CD14-positive monocyte (primary cell): ENCODE measurements at regions of chr16 and their contacts with region 1.

Region 1: DNA sequence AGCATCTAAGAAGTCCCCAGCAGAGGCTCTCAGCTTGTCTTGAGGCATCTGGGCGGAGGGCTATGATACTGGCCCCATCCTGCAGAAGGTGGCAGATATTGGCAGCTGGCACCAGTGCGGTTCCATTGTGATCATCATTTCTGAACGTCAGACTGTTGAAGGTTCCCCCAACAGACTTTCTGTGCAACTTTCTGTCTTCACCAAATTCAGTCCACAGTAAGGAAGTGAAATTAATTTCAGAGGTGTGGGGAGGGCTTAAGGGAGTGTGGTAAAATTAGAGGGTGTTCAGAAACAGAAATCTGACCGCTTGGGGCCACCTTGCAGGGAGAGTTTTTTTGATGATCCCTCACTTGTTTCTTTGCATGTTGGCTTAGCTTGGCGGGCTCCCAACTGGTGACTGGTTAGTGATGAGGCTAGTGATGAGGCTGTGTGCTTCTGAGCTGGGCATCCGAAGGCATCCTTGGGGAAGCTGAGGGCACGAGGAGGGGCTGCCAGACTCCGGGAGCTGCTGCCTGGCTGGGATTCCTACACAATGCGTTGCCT is at the start of gene CIITA:
- DNase-seq: peak; percentile 91 to 96 (median 95)
- H3K4me3 ChIP-seq: peak within 1 kb of the TSS; percentile 82 to 96 (median 94)
- H3K4me3 Mint-ChIP-seq: peak within 1 kb of the TSS; percentile 93 to 97
- H3K27ac ChIP-seq: peak within 1 kb of the TSS; percentile 62 to 85
- H3K27ac Mint-ChIP-seq: peak within 1 kb of the TSS; percentile 91 to 97 (median 95)
- H3K4me1 ChIP-seq: peaks cover 73 to 79% of the 10 kb centered on the region in 2 donors
- H3K4me1 Mint-ChIP-seq: peaks cover 80% of the 10 kb centered on the region
- H3K27me3 ChIP-seq: no peaks in the 10 kb centered on the region
- H3K27me3 Mint-ChIP-seq: peaks cover 0 to 2% (median 0%) of the 10 kb centered on the region in 3 donors
- CTCF ChIP-seq: no peak
- polyA plus RNA-seq, gene CIITA: 15.6 to 178 (median 22.1) TPM

Region 2: DNA sequence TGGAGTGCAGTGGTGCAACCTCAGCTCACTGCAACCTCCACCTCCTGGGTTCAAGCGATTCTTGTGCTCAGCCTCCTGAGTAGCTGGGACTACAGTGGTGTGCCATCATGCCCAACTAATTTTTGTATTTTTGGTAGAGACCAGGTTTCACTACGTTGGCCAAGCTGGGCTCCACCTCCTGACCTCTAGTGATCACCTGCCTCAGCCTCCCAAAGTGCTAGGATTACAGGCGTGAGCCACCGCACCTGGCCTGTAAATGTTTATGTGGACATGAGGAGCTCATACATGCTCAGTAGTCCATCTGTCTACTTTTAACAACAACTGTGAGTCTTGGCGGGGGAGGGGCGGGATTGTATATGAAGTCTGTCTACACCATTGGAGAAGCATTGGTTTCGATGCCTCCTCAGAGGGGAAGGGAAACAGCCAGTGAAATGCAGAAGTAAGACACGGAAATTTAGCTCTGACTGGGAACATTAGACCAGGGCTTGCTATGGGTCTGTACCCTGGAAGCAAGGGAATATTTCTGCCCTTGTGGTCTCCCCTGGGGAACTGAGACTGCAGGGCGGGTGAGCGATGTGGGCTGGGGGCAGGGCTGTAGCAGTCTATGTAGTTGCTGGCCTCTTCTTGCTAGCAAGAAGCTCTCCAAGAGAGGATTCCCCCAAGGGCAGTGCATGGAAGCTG is 123.9 kb before region 1 on chr16:
- intact Hi-C with region 1: loop called in 1 of 2 experiments (anchors 5 kb)
- DNase-seq: peak; percentile 83 to 91 (median 87)
- H3K4me3 ChIP-seq: peak overlapping the region in 1 of 3 experiments; percentile 59
- H3K4me3 Mint-ChIP-seq: peak overlapping the region; percentile 56 to 78
- H3K27ac ChIP-seq: peak overlapping the region; percentile 85 to 88
- H3K27ac Mint-ChIP-seq: peak overlapping the region; percentile 90 to 98 (median 95)
- H3K4me1 ChIP-seq: peaks cover 42 to 57% of the 10 kb centered on the region in 2 donors
- H3K4me1 Mint-ChIP-seq: peaks cover 60% of the 10 kb centered on the region
- H3K27me3 ChIP-seq: no peaks in the 10 kb centered on the region
- H3K27me3 Mint-ChIP-seq: no peaks in the 10 kb centered on the region
- CTCF ChIP-seq: no peak

Region 3: DNA sequence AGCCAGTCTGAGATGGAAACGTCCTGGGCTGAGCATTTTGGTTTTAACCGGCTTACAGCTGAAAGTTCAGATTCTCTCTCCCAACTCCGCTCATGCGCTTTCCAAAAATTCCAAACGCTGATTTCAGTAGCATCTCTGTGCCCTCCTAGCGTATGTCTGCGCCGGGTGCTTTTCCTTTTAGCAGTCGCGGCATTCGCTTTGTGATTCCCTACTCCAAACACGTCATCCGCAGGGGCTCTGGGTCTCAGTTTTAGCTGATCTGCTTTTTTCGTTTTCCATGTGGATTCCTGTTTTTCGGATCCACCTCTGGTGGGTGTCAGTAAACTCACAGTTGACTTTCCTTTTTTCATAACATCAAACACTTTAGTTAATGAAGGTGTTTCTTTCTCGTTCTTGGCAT is 36.2 kb before region 1 on chr16:
- intact Hi-C with region 1: loop called in 1 of 2 experiments (anchors 5 kb)
- DNase-seq: no peak
- H3K4me3 ChIP-seq: no peak overlapping the region
- H3K4me3 Mint-ChIP-seq: no peak overlapping the region
- H3K27ac ChIP-seq: no peak overlapping the region
- H3K27ac Mint-ChIP-seq: no peak overlapping the region
- H3K4me1 ChIP-seq: peaks cover 29 to 35% of the 10 kb centered on the region in 2 donors
- H3K4me1 Mint-ChIP-seq: peaks cover 36% of the 10 kb centered on the region
- H3K27me3 ChIP-seq: no peaks in the 10 kb centered on the region
- H3K27me3 Mint-ChIP-seq: peaks cover 0 to 3% (median 0%) of the 10 kb centered on the region in 3 donors
- CTCF ChIP-seq: no peak

Region 4: GRCh38 chr16:10846213-10846998 is 30.5 kb before region 1 on chr16:
- intact Hi-C with region 1: loop called (anchors 2 to 5 kb)
- DNase-seq: peak; percentile 39 to 65 (median 58)
- H3K4me3 ChIP-seq: peak overlapping the region in 1 of 3 experiments; percentile 66
- H3K4me3 Mint-ChIP-seq: peak overlapping the region; percentile 17 to 84
- H3K27ac ChIP-seq: peak overlapping the region; percentile 72 to 86
- H3K27ac Mint-ChIP-seq: peak overlapping the region; percentile 82 to 96 (median 91)
- H3K4me1 ChIP-seq: peaks cover 77 to 84% of the 10 kb centered on the region in 2 donors
- H3K4me1 Mint-ChIP-seq: peaks cover 85% of the 10 kb centered on the region
- H3K27me3 ChIP-seq: no peaks in the 10 kb centered on the region
- H3K27me3 Mint-ChIP-seq: peaks cover 0 to 7% (median 1%) of the 10 kb centered on the region in 3 donors
- CTCF ChIP-seq: no peak

Region 5: GRCh38 chr16:10895053-10895946 is 18.4 kb after region 1 on chr16:
- intact Hi-C with region 1: loop called in 1 of 2 experiments (anchors 2 kb)
- DNase-seq: no peak
- H3K4me3 ChIP-seq: peak overlapping the region in 1 of 3 experiments; percentile 55
- H3K4me3 Mint-ChIP-seq: no peak overlapping the region
- H3K27ac ChIP-seq: peak overlapping the region; percentile 34 to 77
- H3K27ac Mint-ChIP-seq: peak overlapping the region; percentile 68 to 94 (median 89)
- H3K4me1 ChIP-seq: peaks cover 73 to 77% of the 10 kb centered on the region in 2 donors
- H3K4me1 Mint-ChIP-seq: peaks cover 74% of the 10 kb centered on the region
- H3K27me3 ChIP-seq: no peaks in the 10 kb centered on the region
- H3K27me3 Mint-ChIP-seq: peaks cover 0 to 3% (median 0%) of the 10 kb centered on the region in 3 donors
- CTCF ChIP-seq: no peak

Region 6: GRCh38 chr16:11004957-11005610 is 128.2 kb after region 1 on chr16:
- intact Hi-C with region 1: no loop called
- DNase-seq: no peak
- H3K4me3 ChIP-seq: no peak overlapping the region
- H3K4me3 Mint-ChIP-seq: no peak overlapping the region
- H3K27ac ChIP-seq: no peak overlapping the region
- H3K27ac Mint-ChIP-seq: no peak overlapping the region
- H3K4me1 ChIP-seq: no peaks in the 10 kb centered on the region
- H3K4me1 Mint-ChIP-seq: no peaks in the 10 kb centered on the region
- H3K27me3 ChIP-seq: no peaks in the 10 kb centered on the region
- H3K27me3 Mint-ChIP-seq: peaks cover 0 to 2% (median 2%) of the 10 kb centered on the region in 3 donors
- CTCF ChIP-seq: no peak